HAP-1 (cell line): ENCODE measurements at regions of chr2 and their contacts with region 1.

Region 1: GRCh38 chr2:854460-854859 is 96.2 kb upstream of the SNTG2 start:
- DNase-seq: peak; percentile 28 to 79
- H3K4me3 ChIP-seq: no peak overlapping the region
- H3K4me1 ChIP-seq: no peaks in the 10 kb centered on the region
- H3K27me3 ChIP-seq: no peaks in the 10 kb centered on the region

Region 2: DNA sequence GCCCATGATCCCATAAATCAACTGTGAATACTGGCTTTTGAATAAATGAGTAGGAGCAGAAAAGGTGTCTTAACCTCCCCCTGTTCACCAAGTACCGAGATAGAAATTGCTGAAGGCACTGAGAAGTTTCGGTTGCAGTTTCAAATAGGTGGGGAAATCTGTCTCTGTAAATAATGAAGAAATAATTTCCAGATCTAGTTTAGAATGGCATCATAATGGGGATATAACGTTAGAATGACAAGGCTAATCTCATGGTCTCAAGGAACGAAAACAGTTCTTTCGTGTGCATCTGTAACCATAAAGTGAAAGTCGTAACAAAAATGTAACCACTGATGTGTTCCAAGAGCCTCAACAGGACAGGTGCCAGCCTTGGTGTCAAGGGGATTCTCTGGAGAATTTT is 127.4 kb before region 1 on chr2:
- in situ Hi-C with region 1: no loop called
- DNase-seq: no peak
- H3K4me3 ChIP-seq: no peak overlapping the region
- H3K4me1 ChIP-seq: peaks cover 9% of the 10 kb centered on the region
- H3K27me3 ChIP-seq: no peaks in the 10 kb centered on the region

Region 3: GRCh38 chr2:985317-985898 is 130.9 kb after region 1 on chr2:
- in situ Hi-C with region 1: no loop called
- DNase-seq: no peak
- H3K4me3 ChIP-seq: no peak overlapping the region
- H3K4me1 ChIP-seq: peaks cover 17% of the 10 kb centered on the region
- H3K27me3 ChIP-seq: no peaks in the 10 kb centered on the region

Region 4: DNA sequence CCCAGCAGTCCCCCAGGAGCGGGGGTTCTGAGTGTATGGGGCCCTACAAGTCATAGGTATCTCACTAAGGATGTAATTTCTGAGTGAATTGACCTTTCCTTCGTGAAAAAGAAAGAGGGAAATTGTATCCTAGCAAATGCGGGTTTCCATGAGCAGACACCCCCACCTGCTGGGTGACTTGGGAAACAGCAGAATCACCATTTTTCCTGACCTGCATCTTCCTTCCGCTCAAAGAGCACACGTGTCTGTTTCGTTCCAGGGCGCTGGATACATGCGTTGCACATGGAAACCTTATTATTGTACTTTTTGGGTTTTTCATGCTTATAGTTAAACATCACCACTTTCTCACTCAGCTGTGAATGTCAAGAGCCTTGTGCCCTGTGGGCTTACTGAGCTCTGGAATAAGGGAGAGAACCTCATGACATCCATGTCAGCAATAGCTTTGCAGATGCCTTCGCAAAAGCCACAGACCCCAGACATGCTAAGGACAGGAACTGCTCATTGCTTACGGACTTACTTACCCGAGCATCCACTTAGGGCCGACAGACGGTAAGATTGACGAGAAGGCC is 691.6 kb after region 1 on chr2:
- in situ Hi-C with region 1: loop called (anchors 5 kb)
- DNase-seq: peak; percentile 52 to 71
- H3K4me3 ChIP-seq: no peak overlapping the region
- H3K4me1 ChIP-seq: no peaks in the 10 kb centered on the region; the same call in 1 of the 2 replicates
- H3K27me3 ChIP-seq: no peaks in the 10 kb centered on the region